ENCODE measurements at regions of chr10 and their contacts with region 1.

Region 1: GRCh38 chr10:124802313-124802675 is 675 bp downstream of the ABRAXAS2 start:
- DNase-seq: no peak
- H3K4me3 ChIP-seq: peak overlapping the region; percentile 88 to 98 (median 94)
- H3K27ac ChIP-seq: no peak overlapping the region
- H3K4me1 ChIP-seq: peaks cover 1 to 6% (median 3%) of the 10 kb centered on the region in 4 experiments; a peak in 6 of 7 replicates
- H3K27me3 ChIP-seq: no peaks in the 10 kb centered on the region
- CTCF ChIP-seq: no peak
- EP300 ChIP-seq: no peak
- POLR2A ChIP-seq: no peak
- RAD21 ChIP-seq: no peak

Region 2: GRCh38 chr10:124708922-124709520 is 93.3 kb before region 1 on chr10:
- CTCF ChIA-PET with region 1: no interaction called
- POLR2A ChIA-PET with region 1: no interaction called
- DNase-seq: no peak
- H3K4me3 ChIP-seq: no peak overlapping the region
- H3K27ac ChIP-seq: no peak overlapping the region
- H3K4me1 ChIP-seq: peaks cover 3 to 21% (median 13%) of the 10 kb centered on the region in 4 experiments; a peak in 6 of 7 replicates
- H3K27me3 ChIP-seq: no peaks in the 10 kb centered on the region
- CTCF ChIP-seq: no peak
- EP300 ChIP-seq: no peak
- POLR2A ChIP-seq: no peak
- RAD21 ChIP-seq: no peak

Region 3: GRCh38 chr10:124722798-124723783 is 79.2 kb before region 1 on chr10:
- CTCF ChIA-PET with region 1: no interaction called
- POLR2A ChIA-PET with region 1: no interaction called
- DNase-seq: no peak
- H3K4me3 ChIP-seq: no peak overlapping the region
- H3K27ac ChIP-seq: no peak overlapping the region
- H3K4me1 ChIP-seq: peaks cover 0 to 2% (median 2%) of the 10 kb centered on the region in 4 experiments; a peak in 3 of 7 replicates
- H3K27me3 ChIP-seq: no peaks in the 10 kb centered on the region
- CTCF ChIP-seq: no peak
- EP300 ChIP-seq: no peak
- POLR2A ChIP-seq: no peak
- RAD21 ChIP-seq: no peak

Region 4: GRCh38 chr10:124791378-124792348 is 10.6 kb before region 1 on chr10 and contains the start of gene EEF1AKMT2:
- CTCF ChIA-PET with region 1: interaction called, 3 read pairs
- POLR2A ChIA-PET with region 1: interaction called, 31 read pairs
- DNase-seq: peak; percentile 65 to 91
- H3K4me3 ChIP-seq: peak within 1 kb of the TSS; percentile 75 to 92 (median 88)
- H3K27ac ChIP-seq: peak within 1 kb of the TSS; percentile 79
- H3K4me1 ChIP-seq: no peaks in the 10 kb centered on the region; a peak in 1 of 7 replicates
- H3K27me3 ChIP-seq: no peaks in the 10 kb centered on the region; a peak in 1 of 7 replicates
- CTCF ChIP-seq: peak; percentile 6 to 15 (median 8); a peak in 3 of 4 replicates
- EP300 ChIP-seq: no peak; a peak in 1 of 3 replicates
- POLR2A ChIP-seq: peak; percentile 88 to 94
- RAD21 ChIP-seq: no peak
- total RNA-seq, gene EEF1AKMT2: 19.8 and 26.8 TPM in 2 replicates